Pancreas (tissue), 10 donors: ENCODE measurements at regions of chr1 and their contacts with region 1.

Region 1: DNA sequence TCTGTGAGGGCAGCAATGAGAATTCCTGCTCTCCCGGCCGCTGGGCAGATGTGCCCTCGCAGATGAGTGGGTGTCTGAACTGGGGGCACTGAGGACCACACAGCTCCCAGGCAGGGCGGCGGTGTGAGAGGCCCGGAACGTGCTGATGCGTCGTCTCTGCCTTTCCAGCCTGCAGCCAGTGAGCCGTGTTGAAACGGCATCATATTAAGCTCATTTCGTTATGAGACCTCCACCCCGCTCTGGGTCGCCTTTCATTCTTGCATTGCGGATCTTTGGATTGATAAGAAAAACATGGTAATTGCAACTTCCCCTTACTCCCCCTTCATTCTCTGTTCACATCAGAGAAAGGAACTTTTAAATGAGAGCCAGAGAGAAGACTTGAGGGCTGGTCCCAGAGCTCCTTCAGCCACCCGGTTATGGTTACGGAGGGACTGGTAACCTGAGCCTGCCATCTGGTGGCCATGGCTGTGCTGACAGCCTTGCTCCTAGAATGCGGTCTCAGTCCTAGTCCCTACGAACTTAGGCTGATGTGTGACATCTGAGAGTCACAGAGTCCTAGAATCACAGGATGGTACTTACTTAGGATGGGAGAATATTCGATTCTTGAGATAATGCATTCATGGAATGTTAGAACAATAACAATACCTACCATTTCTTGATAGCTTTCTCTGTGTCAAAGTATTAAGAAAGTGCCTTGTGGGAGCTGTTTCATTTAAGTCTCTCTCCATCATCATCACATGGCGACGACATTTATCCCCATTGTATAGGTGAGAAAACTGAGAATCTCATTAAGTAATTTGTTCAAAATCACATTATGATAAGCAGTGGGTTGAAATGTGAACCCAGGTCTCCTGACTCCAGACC is 271.0 kb downstream of the TRABD2B start:
- DNase-seq: peak; percentile 56 to 86 (median 77)
- ATAC-seq: peak; percentile 88 to 96 (median 94)
- H3K4me3 ChIP-seq: no peak overlapping the region
- H3K27ac ChIP-seq: no peak overlapping the region
- H3K4me1 ChIP-seq: peaks cover 0 to 7% (median 4%) of the 10 kb centered on the region in 3 donors
- H3K27me3 ChIP-seq: peaks cover 0 to 3% (median 0%) of the 10 kb centered on the region in 4 donors
- CTCF ChIP-seq: peak; percentile 77 to 91 (median 83)

Region 2: DNA sequence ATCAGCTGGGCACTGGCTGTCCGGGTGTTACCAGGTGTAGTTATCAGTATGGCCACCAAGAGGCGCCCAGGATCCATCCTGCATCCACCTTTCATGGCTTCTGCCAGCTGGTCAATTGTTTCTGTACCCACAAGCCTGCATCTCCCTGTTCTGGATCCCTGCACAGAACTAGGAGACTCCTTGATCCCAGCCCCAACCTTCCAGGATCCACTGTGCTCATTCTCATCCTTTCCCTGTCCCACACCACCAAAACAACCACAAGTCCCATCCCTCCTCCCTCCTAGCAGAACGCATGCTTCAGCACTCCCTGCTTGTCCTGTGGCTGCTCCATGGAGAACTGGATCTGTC is 337.4 kb before region 1 on chr1:
- intact Hi-C with region 1: no loop called
- DNase-seq: peak; percentile 18 to 77 (median 50)
- ATAC-seq: peak; percentile 68 to 95 (median 88)
- H3K4me3 ChIP-seq: no peak overlapping the region
- H3K27ac ChIP-seq: no peak overlapping the region
- H3K4me1 ChIP-seq: no peaks in the 10 kb centered on the region
- H3K27me3 ChIP-seq: no peaks in the 10 kb centered on the region
- CTCF ChIP-seq: peak; percentile 23 to 63 (median 56)

Region 3: GRCh38 chr1:47432071-47433036 is 293.9 kb before region 1 on chr1:
- intact Hi-C with region 1: loop called in 2 of 3 experiments (anchors 5 kb)
- DNase-seq: peak; percentile 68 to 84 (median 80)
- ATAC-seq: peak; percentile 62 to 85 (median 82)
- H3K4me3 ChIP-seq: peak overlapping the region in 1 of 4 donors; percentile 26
- H3K27ac ChIP-seq: no peak overlapping the region
- H3K4me1 ChIP-seq: peaks cover 5 to 16% (median 5%) of the 10 kb centered on the region in 3 donors
- H3K27me3 ChIP-seq: peaks cover 0 to 6% (median 2%) of the 10 kb centered on the region in 4 donors
- CTCF ChIP-seq: peak; percentile 59 to 88 (median 72)

Region 4: GRCh38 chr1:47437447-47438164 is 288.6 kb before region 1 on chr1 and contains the start of gene FOXD2:
- intact Hi-C with region 1: loop called in 2 of 3 experiments (anchors 5 kb)
- DNase-seq: peak; percentile 84 to 98 (median 90)
- ATAC-seq: peak; percentile 91 to 95 (median 93)
- H3K4me3 ChIP-seq: peak within 1 kb of the TSS; percentile 43 to 71 (median 66)
- H3K27ac ChIP-seq: peak within 1 kb of the TSS; percentile 49 to 88 (median 80)
- H3K4me1 ChIP-seq: peaks cover 5 to 9% (median 5%) of the 10 kb centered on the region in 3 donors
- H3K27me3 ChIP-seq: peaks cover 0 to 7% (median 5%) of the 10 kb centered on the region in 4 donors
- CTCF ChIP-seq: peak; percentile 99 to 100 (median 100)
- total RNA-seq, gene FOXD2: 0.04 to 0.19 (median 0.09) TPM

Region 5: GRCh38 chr1:47643306-47644211 is 82.7 kb before region 1 on chr1:
- intact Hi-C with region 1: no loop called
- DNase-seq: no peak
- ATAC-seq: no peak
- H3K4me3 ChIP-seq: no peak overlapping the region
- H3K27ac ChIP-seq: no peak overlapping the region
- H3K4me1 ChIP-seq: no peaks in the 10 kb centered on the region
- H3K27me3 ChIP-seq: no peaks in the 10 kb centered on the region
- CTCF ChIP-seq: no peak